MCF 10A (cell line): ENCODE measurements at regions of chr1 and their contacts with region 1.

Region 1: DNA sequence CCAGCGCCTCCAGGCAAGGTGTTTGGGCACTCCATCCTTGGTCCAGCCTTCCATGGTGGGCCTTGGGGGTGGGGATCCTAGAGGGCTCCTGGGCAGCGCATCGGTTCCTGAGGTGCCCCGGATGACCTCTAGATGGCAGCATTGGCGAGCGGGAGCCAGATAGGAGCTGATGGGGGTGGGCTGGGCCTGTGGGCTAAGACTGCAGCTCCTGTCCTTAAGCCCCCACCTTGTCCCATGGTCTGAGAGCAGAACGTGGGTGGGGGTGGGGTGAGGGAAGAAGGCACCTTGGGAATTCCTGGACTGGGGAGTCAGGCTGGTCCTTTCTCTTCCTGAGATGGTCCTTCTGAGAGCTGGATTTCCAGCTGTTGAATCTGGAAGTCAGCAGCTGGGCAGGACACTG is 93.4 kb upstream of the CSF3R start:
- DNase-seq: peak; percentile 51
- H3K4me3 Mint-ChIP-seq: no peak overlapping the region
- H3K27ac Mint-ChIP-seq: no peak overlapping the region
- H3K4me1 Mint-ChIP-seq: no peaks in the 10 kb centered on the region
- H3K27me3 Mint-ChIP-seq: peaks cover 43% of the 10 kb centered on the region
- CTCF ChIP-seq: peak; percentile 84

Region 2: GRCh38 chr1:36257375-36257767 is 318.7 kb before region 1 on chr1:
- CTCF ChIA-PET with region 1: no interaction called
- POLR2A ChIA-PET with region 1: no interaction called
- intact Hi-C with region 1: no loop called
- DNase-seq: no peak
- H3K4me3 Mint-ChIP-seq: peak overlapping the region; percentile 3
- H3K27ac Mint-ChIP-seq: peak overlapping the region; percentile 68
- H3K4me1 Mint-ChIP-seq: peaks cover 20% of the 10 kb centered on the region
- H3K27me3 Mint-ChIP-seq: no peaks in the 10 kb centered on the region
- CTCF ChIP-seq: no peak

Region 3: DNA sequence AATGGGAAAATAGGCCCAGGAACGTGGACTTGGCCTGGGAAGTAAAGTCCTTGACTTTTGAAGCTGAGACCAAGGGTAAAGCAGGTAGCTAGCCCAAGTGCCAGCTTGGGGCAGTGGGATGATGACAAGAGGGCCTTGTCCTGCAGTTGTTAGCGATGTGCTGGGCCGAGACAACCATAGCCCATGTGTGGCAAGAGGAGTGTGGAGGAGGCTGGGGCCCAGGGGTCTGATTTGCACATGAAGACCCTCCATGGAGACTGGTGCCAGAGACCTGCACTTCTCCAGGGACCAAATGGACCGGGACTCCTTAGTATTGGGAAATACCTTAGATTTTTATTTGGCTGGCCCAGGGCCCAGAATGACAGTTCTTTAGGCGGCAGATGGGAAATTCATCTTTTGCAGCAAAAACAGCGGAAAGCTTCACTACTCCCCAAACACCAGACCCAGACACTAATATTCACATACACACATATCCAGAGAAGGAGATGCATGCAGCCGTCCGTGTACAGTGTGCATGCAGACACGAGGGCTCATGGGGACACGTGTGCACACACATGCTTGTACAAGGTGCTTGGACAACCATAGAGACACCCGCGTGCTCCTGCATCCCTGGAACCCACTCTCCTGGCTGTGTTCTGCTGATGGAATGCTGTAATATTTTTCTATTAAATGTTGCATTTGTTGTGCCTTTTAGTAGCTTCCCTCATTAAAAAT is 15.3 kb before region 1 on chr1:
- CTCF ChIA-PET with region 1: interaction called, 10 read pairs
- POLR2A ChIA-PET with region 1: no interaction called
- intact Hi-C with region 1: no loop called
- DNase-seq: no peak
- H3K4me3 Mint-ChIP-seq: no peak overlapping the region
- H3K27ac Mint-ChIP-seq: no peak overlapping the region
- H3K4me1 Mint-ChIP-seq: no peaks in the 10 kb centered on the region
- H3K27me3 Mint-ChIP-seq: peaks cover 29% of the 10 kb centered on the region
- CTCF ChIP-seq: no peak

Region 4: GRCh38 chr1:36594023-36594422 is 17.9 kb after region 1 on chr1:
- CTCF ChIA-PET with region 1: interaction called, 12 read pairs
- POLR2A ChIA-PET with region 1: no interaction called
- intact Hi-C with region 1: no loop called
- DNase-seq: no peak
- H3K4me3 Mint-ChIP-seq: no peak overlapping the region
- H3K27ac Mint-ChIP-seq: no peak overlapping the region
- H3K4me1 Mint-ChIP-seq: no peaks in the 10 kb centered on the region
- H3K27me3 Mint-ChIP-seq: peaks cover 70% of the 10 kb centered on the region
- CTCF ChIP-seq: no peak

Region 5: DNA sequence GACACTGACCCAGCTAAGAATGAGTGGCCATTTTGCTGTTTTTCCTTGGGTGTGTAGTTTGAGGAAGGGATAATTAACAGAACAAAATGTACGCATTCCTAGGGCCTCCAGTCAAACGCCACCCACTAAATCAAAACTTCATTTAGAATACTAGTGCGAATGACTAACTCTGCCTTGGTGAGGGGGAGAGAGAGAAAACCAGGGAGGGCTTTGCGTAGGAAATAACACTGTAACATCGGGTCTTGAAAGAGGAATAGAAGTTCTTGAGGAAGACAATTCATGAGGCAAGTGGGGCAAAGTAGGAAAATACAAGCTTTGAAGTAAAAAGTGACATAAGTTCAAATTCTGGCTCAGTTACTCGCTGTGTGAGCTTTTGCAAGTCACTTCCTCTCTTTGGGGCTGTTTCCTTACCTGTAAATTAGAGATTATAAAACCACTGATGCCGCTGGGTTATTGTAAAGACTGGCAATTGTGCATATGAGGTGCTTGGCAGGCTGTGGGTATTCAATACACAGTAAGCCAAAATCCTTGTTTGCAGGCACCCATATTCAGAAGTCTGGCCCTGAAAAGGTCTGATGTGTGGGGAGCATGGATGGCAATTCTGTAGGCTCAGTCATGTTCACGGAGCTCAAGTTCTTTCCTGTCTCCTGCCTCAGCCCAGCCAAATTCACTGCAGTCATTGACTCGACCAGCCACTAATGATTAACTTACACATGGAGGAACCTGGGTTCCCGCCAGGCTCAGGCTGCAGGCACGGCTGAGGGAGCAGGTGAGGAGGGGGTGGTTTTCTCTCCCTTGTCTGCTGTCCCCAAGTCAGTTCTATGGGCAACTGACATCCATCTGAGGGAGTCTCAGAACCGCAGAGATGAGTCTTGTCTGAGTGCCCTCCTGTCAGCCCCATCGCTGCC is 46.9 kb after region 1 on chr1:
- CTCF ChIA-PET with region 1: no interaction called
- POLR2A ChIA-PET with region 1: no interaction called
- intact Hi-C with region 1: no loop called
- DNase-seq: no peak
- H3K4me3 Mint-ChIP-seq: no peak overlapping the region
- H3K27ac Mint-ChIP-seq: no peak overlapping the region
- H3K4me1 Mint-ChIP-seq: no peaks in the 10 kb centered on the region
- H3K27me3 Mint-ChIP-seq: peaks cover 20% of the 10 kb centered on the region
- CTCF ChIP-seq: no peak

Region 6: DNA sequence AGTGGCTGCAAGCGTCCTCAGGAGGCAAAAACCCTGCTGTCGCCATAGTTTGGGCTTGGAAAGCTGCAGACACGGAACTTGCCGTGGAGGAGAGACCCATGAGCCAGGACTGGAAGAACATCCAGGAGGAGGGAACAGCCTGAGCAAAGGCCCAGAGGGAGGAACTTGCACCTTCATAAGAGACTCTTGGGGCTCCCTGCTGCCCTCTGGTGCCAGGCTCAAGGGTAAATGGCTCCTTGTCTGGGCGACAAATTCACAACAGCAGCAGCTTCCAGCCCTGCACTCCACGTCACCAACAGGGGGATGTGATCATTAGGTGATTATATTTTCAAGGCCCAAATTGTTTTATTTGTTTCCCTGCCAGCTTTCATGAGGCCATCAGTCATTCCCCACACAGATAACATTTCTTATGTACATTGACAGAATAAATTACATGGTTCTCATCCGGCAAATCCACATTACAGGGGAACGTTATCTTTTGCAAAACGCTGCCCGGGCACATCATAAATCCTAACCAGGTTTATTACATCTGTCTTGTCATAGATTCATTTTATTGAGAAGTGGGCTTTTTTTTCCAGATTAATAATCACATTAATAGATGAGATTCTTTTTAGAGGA is 601.2 kb after region 1 on chr1:
- CTCF ChIA-PET with region 1: no interaction called
- POLR2A ChIA-PET with region 1: no interaction called
- intact Hi-C with region 1: loop called (anchors 10 kb)
- DNase-seq: peak; percentile 53
- H3K4me3 Mint-ChIP-seq: no peak overlapping the region
- H3K27ac Mint-ChIP-seq: no peak overlapping the region
- H3K4me1 Mint-ChIP-seq: no peaks in the 10 kb centered on the region
- H3K27me3 Mint-ChIP-seq: no peaks in the 10 kb centered on the region
- CTCF ChIP-seq: peak; percentile 16

Region 7: GRCh38 chr1:37323486-37324377 is 747.6 kb after region 1 on chr1:
- CTCF ChIA-PET with region 1: interaction called, 19 read pairs
- POLR2A ChIA-PET with region 1: no interaction called
- intact Hi-C with region 1: loop called (anchors 1 kb)
- DNase-seq: peak; percentile 65
- H3K4me3 Mint-ChIP-seq: no peak overlapping the region
- H3K27ac Mint-ChIP-seq: no peak overlapping the region
- H3K4me1 Mint-ChIP-seq: no peaks in the 10 kb centered on the region
- H3K27me3 Mint-ChIP-seq: peaks cover 34% of the 10 kb centered on the region
- CTCF ChIP-seq: peak; percentile 84